ENCODE measurements at regions of chr14 and their contacts with region 1.

Region 1: DNA sequence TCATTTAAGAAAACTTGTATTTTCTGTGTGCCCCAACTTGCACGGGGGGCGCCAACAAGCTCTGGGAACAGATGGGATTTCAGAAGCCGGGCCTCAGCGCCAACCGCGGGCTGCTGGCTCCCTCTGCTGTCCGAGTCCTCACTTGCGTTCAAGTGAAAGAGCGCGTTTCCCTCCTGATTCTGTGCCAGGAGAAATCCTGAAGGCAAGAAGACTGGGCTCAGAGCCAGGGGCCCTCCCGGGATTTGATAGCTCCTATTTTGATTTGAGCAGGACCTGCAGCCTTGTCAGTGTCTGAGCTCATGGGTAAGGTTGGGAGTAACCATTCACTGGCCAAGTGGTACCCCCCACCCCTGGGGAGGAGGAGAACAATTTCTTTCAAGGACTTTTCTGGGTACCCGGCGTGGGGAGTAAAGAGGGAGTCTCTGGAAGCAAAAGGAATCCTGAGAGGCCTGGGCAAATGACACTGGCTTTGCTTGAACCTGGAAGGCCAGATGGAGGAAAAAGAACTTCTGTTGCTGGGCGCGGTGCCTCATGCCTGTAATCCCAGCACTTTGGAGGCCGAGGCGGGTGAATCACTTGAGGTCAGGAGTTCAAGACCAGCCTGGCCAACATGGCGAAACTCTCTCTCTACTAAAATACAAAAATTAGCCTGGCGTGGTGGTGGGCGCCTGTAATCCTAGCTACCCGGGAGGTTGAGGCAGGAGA is 179.0 kb upstream of the RGS6 start:
- DNase-seq: no peak
- H3K4me3 ChIP-seq: peak overlapping the region in 2 of 4 donors; percentile 6 to 43
- H3K27ac ChIP-seq: peak overlapping the region in 1 of 4 donors; percentile 9
- H3K4me1 ChIP-seq: peaks cover 9 to 10% (median 9%) of the 10 kb centered on the region in 3 donors
- H3K27me3 ChIP-seq: no peaks in the 10 kb centered on the region
- CTCF ChIP-seq: peak; percentile 58 to 91 (median 85)
- POLR2A ChIP-seq: no peak

Region 2: DNA sequence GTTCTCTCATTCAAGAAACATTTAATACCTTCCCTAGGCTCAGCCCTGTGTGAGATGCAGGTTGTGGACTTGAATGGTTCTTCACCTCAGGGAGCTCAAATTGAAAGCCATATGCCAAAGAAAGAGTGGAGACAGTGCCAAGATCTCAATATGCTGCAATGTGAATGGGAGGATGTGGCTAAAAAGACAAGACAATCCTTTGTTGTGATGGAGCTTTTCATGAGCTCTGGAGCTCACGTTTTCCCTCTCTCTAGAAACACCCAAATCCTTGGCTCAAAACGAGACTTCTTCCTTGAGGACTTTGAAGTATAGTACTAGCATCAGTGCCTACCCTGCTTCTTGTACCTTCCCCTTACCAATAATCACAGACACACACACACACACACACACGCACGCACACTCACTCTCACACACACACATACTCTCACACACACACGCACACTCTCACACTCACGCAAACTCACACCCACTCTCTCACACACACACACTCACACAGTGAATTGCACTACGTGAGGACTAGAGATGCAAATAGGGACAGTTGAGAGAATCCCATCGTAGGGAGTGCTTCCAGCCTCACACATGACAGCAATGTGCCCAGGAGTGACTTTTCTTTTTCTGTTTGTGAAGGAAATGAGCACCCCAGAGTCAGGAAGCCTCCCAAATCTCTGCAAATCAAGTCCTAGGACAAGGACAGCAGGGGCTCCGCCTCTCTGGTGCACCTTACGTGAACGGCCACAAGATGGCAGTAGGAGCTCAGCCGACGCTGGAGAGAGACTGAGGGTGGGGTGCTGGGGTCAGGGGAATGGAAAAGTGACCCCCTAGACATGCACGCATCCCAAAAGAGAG is 614.6 kb before region 1 on chr14:
- intact Hi-C with region 1: loop called (anchors 5 kb)
- DNase-seq: no peak
- H3K4me3 ChIP-seq: no peak overlapping the region
- H3K27ac ChIP-seq: no peak overlapping the region
- H3K4me1 ChIP-seq: peaks cover 0 to 13% (median 4%) of the 10 kb centered on the region in 3 donors
- H3K27me3 ChIP-seq: no peaks in the 10 kb centered on the region
- CTCF ChIP-seq: peak; percentile 79 to 89 (median 85)
- POLR2A ChIP-seq: no peak

Region 3: DNA sequence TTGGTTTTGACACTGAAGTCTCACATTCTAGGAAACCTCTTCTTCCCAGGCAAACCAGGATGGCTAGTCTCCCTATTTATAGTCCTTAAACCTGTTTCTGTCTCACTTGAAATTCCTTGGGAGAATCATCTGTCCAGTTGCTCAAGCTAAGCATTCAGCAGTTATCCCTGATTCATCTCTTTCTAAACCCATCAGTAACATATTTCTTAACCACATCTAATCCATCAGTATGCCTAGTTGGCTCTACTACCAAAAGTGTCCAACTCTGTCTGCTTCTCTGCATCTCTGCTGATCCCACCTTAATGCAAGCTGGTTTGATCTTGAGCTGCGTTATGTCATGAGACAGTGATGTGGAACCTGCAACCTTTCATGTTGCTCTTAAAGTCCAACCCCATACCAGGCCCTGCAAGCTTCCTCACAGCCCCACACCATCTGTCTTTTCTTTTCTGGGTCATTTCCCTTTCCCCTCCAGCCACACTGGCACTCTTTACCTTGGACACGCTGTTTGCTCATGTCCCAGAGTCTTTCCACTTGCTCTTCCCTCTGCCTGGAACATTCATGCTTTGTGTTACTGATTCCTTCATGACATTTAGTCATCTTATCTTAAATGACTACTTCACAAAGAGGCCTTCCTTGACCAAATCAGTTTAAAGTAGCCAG is 201.9 kb before region 1 on chr14:
- intact Hi-C with region 1: no loop called
- DNase-seq: no peak
- H3K4me3 ChIP-seq: no peak overlapping the region
- H3K27ac ChIP-seq: no peak overlapping the region
- H3K4me1 ChIP-seq: peaks cover 0 to 12% (median 0%) of the 10 kb centered on the region in 3 donors
- H3K27me3 ChIP-seq: no peaks in the 10 kb centered on the region
- CTCF ChIP-seq: no peak
- POLR2A ChIP-seq: no peak

Region 4: DNA sequence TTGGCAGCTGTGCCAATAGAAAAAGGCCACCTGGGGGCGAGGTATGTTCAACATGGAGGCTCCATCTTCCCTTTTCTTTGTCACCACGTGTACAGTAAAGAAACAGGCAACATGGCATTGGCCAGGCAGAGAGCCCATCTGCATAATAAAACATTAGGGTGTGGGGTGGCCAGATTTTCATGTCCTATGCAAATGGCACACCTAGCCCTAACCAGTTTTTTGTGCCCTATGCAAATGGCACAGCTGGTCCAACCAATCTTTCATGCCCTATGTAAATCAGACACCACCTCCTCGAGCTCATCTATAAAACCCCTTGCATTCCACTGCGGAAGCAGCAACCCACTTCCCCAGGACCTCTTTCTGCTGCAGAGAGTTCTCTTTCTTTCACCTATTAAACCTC is 29.8 kb after region 1 on chr14:
- intact Hi-C with region 1: no loop called
- DNase-seq: no peak
- H3K4me3 ChIP-seq: no peak overlapping the region
- H3K27ac ChIP-seq: no peak overlapping the region
- H3K4me1 ChIP-seq: peaks cover 0 to 5% (median 5%) of the 10 kb centered on the region in 3 donors
- H3K27me3 ChIP-seq: no peaks in the 10 kb centered on the region
- CTCF ChIP-seq: no peak
- POLR2A ChIP-seq: no peak

Region 5: GRCh38 chr14:71942904-71943694 is 189.8 kb after region 1 on chr14:
- intact Hi-C with region 1: no loop called
- DNase-seq: no peak
- H3K4me3 ChIP-seq: no peak overlapping the region
- H3K27ac ChIP-seq: no peak overlapping the region
- H3K4me1 ChIP-seq: no peaks in the 10 kb centered on the region
- H3K27me3 ChIP-seq: no peaks in the 10 kb centered on the region
- CTCF ChIP-seq: no peak
- POLR2A ChIP-seq: no peak

Measured in esophagus squamous epithelium (tissue), 5 donors.